ENCODE measurements at regions of chr1 and their contacts with region 1.

Region 1: GRCh38 chr1:44819608-44820327 is 11.4 kb downstream of the BTBD19 start:
- DNase-seq: peak; percentile 90
- ATAC-seq: peak; percentile 96
- H3K4me3 ChIP-seq: peak overlapping the region; percentile 36; the same call in 1 of the 2 replicates
- H3K27ac ChIP-seq: peak overlapping the region; percentile 100
- H3K4me1 ChIP-seq: peaks cover 6% of the 10 kb centered on the region
- H3K27me3 ChIP-seq: no peaks in the 10 kb centered on the region
- CTCF ChIP-seq: peak in 2 of 3 experiments; percentile 15 to 29; a peak in 2 of 6 replicates
- EP300 ChIP-seq: peak in 1 of 2 experiments; percentile 1; a peak in 1 of 4 replicates
- POLR2A ChIP-seq: peak; percentile 100
- RAD21 ChIP-seq: peak; percentile 26; the same call in 1 of the 2 replicates

Region 2: GRCh38 chr1:44721485-44722361 is 98.0 kb before region 1 on chr1:
- CTCF ChIA-PET with region 1: interaction called, 6 read pairs
- POLR2A ChIA-PET with region 1: interaction called, 29 read pairs
- RAD21 ChIA-PET with region 1: interaction called, 7 read pairs
- SMC1A ChIA-PET with region 1: interaction called, 9 read pairs
- in situ Hi-C with region 1: no loop called
- intact Hi-C with region 1: loop called (anchors 1 kb)
- DNase-seq: peak; percentile 99
- ATAC-seq: peak; percentile 91
- H3K4me3 ChIP-seq: no peak overlapping the region
- H3K27ac ChIP-seq: peak overlapping the region; percentile 99
- H3K4me1 ChIP-seq: peaks cover 49% of the 10 kb centered on the region
- H3K27me3 ChIP-seq: no peaks in the 10 kb centered on the region
- CTCF ChIP-seq: peak in 1 of 3 experiments; percentile 16; a peak in 1 of 6 replicates
- EP300 ChIP-seq: no peak
- POLR2A ChIP-seq: peak; percentile 97
- RAD21 ChIP-seq: peak; percentile 18; the same call in 1 of the 2 replicates

Region 3: DNA sequence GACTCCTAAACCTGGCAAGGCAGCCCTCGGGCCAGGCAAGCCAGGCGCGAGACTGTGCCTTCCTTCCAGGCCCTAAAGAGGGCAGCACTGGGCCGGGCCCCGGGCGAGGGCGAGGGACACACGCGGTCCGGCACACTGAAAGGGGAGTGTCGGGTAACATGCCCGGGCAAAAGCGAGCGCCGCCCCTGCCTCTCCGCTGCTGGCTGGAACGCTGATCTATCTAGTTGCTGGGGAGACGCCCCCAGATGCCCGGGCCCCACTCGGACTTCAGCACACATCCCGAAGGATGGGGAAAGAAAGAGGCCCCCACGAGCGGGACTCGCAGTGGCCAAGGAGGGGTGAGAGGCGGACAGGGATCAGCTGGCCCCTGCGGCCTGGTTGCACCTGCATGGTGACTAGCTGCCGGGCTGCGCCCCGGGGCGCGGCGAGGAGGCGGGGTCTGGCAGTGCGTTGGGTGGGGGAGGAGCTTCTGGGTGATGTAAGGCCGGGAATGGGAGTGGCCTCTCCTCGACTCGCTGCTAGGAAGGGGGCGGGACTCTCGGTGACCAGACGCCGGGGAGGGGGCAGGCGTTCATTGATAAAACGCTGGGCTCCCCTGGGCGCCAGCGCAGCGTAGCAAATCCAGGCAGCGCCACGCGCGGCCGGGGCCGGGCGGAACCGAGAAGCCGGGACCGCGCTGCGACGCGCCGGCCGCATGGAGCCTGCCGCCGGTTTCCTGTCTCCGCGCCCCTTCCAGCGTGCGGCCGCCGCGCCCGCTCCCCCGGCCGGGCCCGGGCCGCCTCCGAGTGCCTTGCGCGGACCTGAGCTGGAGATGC is 19.8 kb before region 1 on chr1 and contains the start of gene PLK3:
- CTCF ChIA-PET with region 1: interaction called, 45 read pairs
- POLR2A ChIA-PET with region 1: interaction called, 56 read pairs
- RAD21 ChIA-PET with region 1: interaction called, 23 read pairs
- SMC1A ChIA-PET with region 1: interaction called, 6 read pairs
- in situ Hi-C with region 1: no loop called
- intact Hi-C with region 1: no loop called
- DNase-seq: peak; percentile 91
- ATAC-seq: peak; percentile 91
- H3K4me3 ChIP-seq: peak within 1 kb of the TSS; percentile 94
- H3K27ac ChIP-seq: peak within 1 kb of the TSS; percentile 84
- H3K4me1 ChIP-seq: peaks cover 11% of the 10 kb centered on the region
- H3K27me3 ChIP-seq: no peaks in the 10 kb centered on the region
- CTCF ChIP-seq: peak; percentile 92 to 97 (median 95)
- EP300 ChIP-seq: no peak
- POLR2A ChIP-seq: peak; percentile 90
- RAD21 ChIP-seq: peak; percentile 86
- polyA plus RNA-seq, gene PLK3: 1.5 to 1.9 TPM

Region 4: DNA sequence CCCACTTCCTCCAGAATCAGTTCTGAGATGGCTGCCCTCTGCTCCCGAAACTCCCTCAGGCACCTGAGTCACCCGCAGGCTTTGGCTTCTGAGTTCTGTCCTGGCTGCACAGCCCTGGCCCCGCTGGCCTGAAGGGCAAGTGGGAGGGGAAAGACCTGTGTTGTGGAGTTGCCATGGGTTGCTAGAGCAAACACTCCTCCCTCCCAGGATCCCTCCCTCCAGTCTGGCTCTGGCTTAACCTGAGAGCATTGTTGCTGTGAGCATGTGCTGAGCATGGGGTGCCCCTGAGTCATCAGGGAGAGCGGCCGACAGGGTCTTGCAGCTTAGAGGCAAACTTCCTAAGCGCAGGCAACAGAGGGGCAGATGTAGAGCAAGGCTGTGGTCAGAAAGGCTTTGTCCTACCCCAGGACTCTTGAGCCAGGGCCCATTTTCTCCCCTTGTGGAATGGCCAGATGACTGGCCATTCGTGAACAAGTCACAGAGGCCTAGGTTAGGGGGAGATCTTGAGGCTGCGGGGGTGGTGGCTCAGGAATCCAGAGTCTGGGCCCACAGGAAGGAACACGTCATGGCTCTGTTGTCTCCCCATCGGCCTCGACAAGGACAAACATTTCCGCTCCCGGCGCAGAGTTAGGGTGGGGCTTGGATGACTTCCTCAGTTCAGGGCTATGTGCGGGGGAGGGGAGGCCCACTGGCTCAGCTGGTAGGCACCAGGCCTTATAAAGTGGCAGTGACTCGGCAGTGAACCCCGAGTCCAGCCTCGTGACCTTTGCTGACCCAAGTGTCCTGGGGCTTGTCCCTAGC is 12.3 kb before region 1 on chr1 and contains the start of gene DYNLT4:
- CTCF ChIA-PET with region 1: interaction called, 36 read pairs
- POLR2A ChIA-PET with region 1: interaction called, 56 read pairs
- RAD21 ChIA-PET with region 1: interaction called, 41 read pairs
- SMC1A ChIA-PET with region 1: interaction called, 52 read pairs
- in situ Hi-C with region 1: no loop called
- intact Hi-C with region 1: no loop called
- DNase-seq: peak; percentile 65
- ATAC-seq: peak; percentile 64
- H3K4me3 ChIP-seq: no peak within 1 kb of the TSS
- H3K27ac ChIP-seq: peak within 1 kb of the TSS; percentile 95
- H3K4me1 ChIP-seq: peaks cover 53% of the 10 kb centered on the region
- H3K27me3 ChIP-seq: no peaks in the 10 kb centered on the region
- CTCF ChIP-seq: no peak
- EP300 ChIP-seq: peak in 1 of 2 experiments; percentile 44; a peak in 2 of 4 replicates
- POLR2A ChIP-seq: no peak; the same call in none of the 2 replicates
- RAD21 ChIP-seq: no peak
- polyA plus RNA-seq, gene DYNLT4: not detected

Measured in GM12878 (cell line).